ENCODE measurements at regions of chr7 and their contacts with region 1.

Region 1: DNA sequence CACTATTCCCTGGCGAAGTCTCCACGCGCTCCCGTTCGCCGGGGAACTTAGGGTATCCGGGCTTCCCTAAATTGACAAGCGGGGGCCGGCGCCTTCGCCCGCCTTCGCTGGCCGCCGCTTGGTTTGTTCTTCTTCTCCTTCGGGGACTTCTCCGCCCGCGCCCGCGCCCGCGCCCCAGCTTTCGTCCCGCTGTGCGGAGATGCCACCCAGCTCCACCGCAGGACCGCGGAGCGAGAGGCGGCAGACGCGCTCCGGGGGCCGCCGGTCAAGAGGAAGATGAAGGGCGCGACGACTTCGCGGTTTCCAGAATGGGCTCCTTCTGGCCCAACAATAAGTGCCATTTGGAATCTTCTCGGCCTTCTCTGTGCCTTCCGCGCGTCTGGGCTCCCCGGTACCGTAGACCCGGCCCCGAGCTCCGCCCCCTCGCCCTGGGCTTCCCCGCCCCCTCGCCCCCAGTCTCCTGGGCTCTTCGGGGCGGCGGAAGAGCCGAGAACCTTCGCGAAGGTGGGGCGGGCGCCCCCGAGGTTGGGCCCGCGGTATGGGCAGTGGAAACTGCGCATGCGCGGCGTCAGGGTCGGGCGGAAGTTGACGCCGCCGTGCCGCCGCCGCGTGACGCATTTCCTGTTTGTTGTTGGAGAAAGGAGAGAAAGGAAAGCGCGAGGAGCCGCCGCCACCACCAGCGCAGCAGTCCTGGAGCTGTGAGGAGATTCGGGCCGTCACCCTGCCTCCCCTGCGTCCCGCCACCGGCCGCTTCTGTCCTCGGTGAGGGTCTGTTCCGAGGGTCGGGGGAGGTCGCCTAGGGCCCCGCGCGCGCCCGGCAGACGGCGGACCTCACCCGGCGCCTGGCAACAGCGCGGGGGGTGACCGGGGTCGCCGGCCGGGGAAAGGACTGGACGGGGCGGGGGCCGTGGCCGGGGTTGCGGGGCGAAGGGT is at the start of gene DNAJB6:
- DNase-seq: peak; percentile 96
- H3K4me3 Mint-ChIP-seq: peak within 1 kb of the TSS; percentile 94
- H3K27ac Mint-ChIP-seq: peak within 1 kb of the TSS; percentile 96
- H3K4me1 Mint-ChIP-seq: peaks cover 43% of the 10 kb centered on the region
- H3K27me3 Mint-ChIP-seq: peaks cover 17% of the 10 kb centered on the region
- total RNA-seq, gene DNAJB6: 85.9 to 97.1 TPM

Region 2: DNA sequence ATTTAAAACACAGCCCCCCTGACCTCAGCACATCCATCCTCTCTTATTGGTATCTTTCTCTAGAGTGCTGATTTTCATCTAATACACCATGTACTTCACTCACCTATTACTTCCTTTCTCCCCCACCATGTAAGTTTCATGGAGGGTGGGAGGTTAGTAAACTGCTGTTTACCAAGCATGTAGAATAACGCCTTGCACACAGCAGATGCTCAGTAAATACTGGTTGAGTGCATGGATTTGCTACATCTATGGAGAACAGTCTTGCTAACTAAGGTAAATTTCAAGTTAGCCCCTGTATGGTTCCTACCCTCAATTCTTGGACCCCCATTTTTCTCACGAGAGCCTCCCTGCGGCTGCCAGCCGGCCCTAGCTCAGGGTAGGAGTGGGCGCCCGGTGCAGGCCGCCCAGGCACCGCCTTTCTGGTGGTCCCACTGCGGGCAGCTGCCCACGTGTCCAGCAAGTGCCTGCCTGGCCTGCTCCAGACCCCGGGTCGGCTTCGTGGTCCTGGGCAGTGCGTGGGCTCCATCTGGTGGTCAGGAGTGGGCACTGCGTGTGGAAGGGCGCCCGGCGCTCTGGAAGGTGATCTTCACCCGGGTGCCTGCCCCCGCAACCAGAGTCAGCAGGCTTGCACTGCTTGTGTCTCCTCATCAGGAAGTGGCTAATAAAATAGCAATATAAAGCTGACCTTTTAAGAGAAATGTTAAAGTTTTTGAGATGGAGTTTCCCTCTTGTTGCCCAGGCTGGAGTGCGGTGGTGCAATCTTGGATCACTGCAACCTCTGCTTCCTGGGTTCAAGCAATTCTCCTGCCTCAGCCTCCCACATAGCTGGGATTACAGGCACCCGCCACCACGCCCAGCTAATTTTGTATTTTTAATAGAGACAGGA is 63.2 kb before region 1 on chr7:
- CTCF ChIA-PET with region 1: interaction called, 14 read pairs
- POLR2A ChIA-PET with region 1: interaction called, 3 read pairs
- DNase-seq: peak; percentile 59
- H3K4me3 Mint-ChIP-seq: no peak overlapping the region
- H3K27ac Mint-ChIP-seq: no peak overlapping the region
- H3K4me1 Mint-ChIP-seq: peaks cover 42% of the 10 kb centered on the region
- H3K27me3 Mint-ChIP-seq: peaks cover 4% of the 10 kb centered on the region

Region 3: DNA sequence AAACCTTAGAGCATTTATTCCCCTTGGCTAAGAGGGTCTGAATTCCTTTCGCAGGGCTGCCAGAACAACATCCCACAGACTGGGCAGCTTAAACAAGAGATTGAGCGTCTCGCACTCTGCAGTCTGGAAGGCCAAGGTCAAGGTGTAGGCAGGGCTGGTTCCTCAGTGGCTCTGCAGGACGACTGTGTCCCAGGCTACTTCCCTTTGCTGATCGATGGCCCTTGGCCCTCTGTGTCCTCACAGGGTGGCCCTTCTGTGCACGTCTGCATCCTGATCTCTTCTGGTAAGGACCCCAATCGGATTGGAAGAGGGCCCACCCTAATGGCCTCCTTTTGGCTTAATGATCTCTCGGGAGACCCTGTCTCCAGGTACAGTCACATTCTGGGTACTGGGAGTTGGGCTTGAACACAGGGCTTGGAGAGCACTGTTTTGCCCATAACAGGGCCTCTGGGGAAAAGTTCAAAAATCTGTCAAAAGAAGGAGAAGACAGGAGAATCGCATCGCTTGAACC is 35.0 kb before region 1 on chr7:
- CTCF ChIA-PET with region 1: interaction called, 12 read pairs
- POLR2A ChIA-PET with region 1: interaction called, 57 read pairs
- DNase-seq: no peak
- H3K4me3 Mint-ChIP-seq: peak overlapping the region; percentile 63
- H3K27ac Mint-ChIP-seq: peak overlapping the region; percentile 98
- H3K4me1 Mint-ChIP-seq: peaks cover 65% of the 10 kb centered on the region
- H3K27me3 Mint-ChIP-seq: no peaks in the 10 kb centered on the region

Region 4: DNA sequence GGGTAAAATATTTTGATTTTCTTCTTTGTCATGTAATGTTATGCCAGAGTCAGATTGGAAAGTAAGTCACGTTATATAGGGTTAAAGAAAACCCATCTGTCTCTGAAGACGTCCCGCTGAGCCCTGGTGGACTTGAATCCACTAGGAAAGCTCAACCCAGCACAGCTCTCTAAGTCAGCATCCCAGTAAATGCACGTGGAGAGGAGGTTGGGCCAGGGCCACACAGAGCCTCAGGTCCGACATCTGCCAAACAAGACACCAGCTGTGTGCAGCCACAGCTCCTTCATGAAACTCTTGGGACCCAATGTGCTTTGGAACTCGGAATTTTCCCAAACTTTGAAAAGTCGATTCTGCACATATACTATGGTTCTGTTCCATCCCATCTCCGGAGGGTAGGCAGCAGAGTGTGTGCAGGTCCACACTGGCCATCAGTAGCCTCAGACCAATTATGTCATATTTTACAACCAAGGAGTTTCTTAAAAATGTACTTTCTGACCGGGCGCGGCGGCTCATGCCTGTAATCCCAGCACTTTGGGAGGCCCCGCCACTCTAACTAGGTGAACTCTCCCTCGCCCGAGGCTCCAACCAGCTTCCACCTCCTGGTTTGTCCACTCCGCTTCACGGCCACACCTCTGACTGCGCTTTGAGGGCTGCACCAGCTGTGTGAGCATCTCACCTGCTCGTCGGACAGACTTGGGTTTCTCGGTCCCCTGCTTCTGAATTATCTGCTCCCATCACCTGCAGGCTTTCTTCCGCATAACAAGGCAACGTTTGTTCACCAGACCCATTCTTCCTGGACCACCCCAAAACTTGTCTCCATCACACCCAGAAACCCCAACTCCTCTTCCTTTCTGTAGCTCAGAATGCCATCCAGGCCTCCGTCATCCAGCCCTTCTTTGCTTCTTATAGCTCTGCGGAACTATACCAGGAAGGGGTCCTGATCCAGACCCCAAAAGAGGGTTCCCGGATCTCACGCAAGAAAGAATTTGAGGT is 29.5 kb before region 1 on chr7:
- CTCF ChIA-PET with region 1: interaction called, 12 read pairs
- POLR2A ChIA-PET with region 1: interaction called, 57 read pairs
- DNase-seq: no peak
- H3K4me3 Mint-ChIP-seq: no peak overlapping the region
- H3K27ac Mint-ChIP-seq: peak overlapping the region; percentile 47
- H3K4me1 Mint-ChIP-seq: peaks cover 60% of the 10 kb centered on the region
- H3K27me3 Mint-ChIP-seq: no peaks in the 10 kb centered on the region

Region 5: GRCh38 chr7:157386979-157387800 is 50.5 kb after region 1 on chr7:
- CTCF ChIA-PET with region 1: interaction called, 27 read pairs
- POLR2A ChIA-PET with region 1: interaction called, 7 read pairs
- DNase-seq: peak; percentile 92
- H3K4me3 Mint-ChIP-seq: peak overlapping the region; percentile 16
- H3K27ac Mint-ChIP-seq: peak overlapping the region; percentile 64
- H3K4me1 Mint-ChIP-seq: peaks cover 56% of the 10 kb centered on the region
- H3K27me3 Mint-ChIP-seq: no peaks in the 10 kb centered on the region

Region 6: GRCh38 chr7:157432957-157433576 is 96.4 kb after region 1 on chr7:
- CTCF ChIA-PET with region 1: no interaction called
- POLR2A ChIA-PET with region 1: no interaction called
- DNase-seq: peak; percentile 73
- H3K4me3 Mint-ChIP-seq: peak overlapping the region; percentile 33
- H3K27ac Mint-ChIP-seq: no peak overlapping the region
- H3K4me1 Mint-ChIP-seq: peaks cover 20% of the 10 kb centered on the region
- H3K27me3 Mint-ChIP-seq: peaks cover 8% of the 10 kb centered on the region